ENCODE measurements at regions of chr9 and their contacts with region 1.

Region 1: DNA sequence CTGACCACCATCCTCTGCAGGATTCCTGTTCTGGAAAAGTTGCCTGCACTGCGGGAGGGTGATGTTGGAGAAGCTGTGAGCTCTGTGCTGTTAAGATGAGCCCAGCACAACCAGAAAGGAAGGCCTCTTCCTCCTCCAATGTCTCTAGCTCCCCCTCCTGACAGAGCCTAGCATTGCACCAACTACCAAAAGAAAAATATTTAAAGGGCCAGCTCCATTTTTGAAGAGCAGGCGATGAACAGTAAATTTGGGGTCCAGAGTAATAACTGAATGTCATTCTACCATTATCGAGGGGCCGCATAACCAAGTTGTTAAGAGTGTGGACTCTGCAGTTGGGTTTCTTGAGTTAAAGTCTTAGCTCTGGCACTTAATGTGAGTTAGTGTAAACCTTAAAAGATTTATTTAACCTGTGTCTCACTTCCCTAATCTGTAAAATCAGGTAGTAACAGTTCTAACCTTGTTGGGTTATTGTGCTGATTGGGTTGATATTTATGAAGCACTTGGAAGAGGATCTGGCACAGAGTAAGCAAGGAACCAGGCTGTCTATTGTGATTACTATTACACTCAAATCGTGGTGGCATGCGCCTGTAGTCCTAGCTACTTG is 3.9 kb downstream of the TEX53 start:
- DNase-seq: peak; percentile 72 to 85
- H3K4me3 ChIP-seq: no peak overlapping the region
- H3K4me3 Mint-ChIP-seq: no peak overlapping the region
- H3K27ac Mint-ChIP-seq: no peak overlapping the region
- H3K4me1 ChIP-seq: no peaks in the 10 kb centered on the region
- H3K4me1 Mint-ChIP-seq: no peaks in the 10 kb centered on the region
- H3K27me3 ChIP-seq: no peaks in the 10 kb centered on the region
- H3K27me3 Mint-ChIP-seq: no peaks in the 10 kb centered on the region
- CTCF ChIP-seq: peak; percentile 88 to 92

Region 2: GRCh38 chr9:114434878-114435311 is 218.8 kb before region 1 on chr9:
- CTCF ChIA-PET with region 1: interaction called, 26 read pairs
- POLR2A ChIA-PET with region 1: no interaction called
- intact Hi-C with region 1: loop called (anchors 1 kb)
- DNase-seq: peak; percentile 41 to 64
- H3K4me3 ChIP-seq: no peak overlapping the region
- H3K4me3 Mint-ChIP-seq: no peak overlapping the region
- H3K27ac Mint-ChIP-seq: no peak overlapping the region
- H3K4me1 ChIP-seq: no peaks in the 10 kb centered on the region
- H3K4me1 Mint-ChIP-seq: no peaks in the 10 kb centered on the region
- H3K27me3 ChIP-seq: no peaks in the 10 kb centered on the region
- H3K27me3 Mint-ChIP-seq: peaks cover 6% of the 10 kb centered on the region
- CTCF ChIP-seq: peak; percentile 68 to 70

Region 3: GRCh38 chr9:114487607-114488300 is 165.9 kb before region 1 on chr9:
- CTCF ChIA-PET with region 1: interaction called, 8 read pairs
- POLR2A ChIA-PET with region 1: no interaction called
- intact Hi-C with region 1: loop called (anchors 1 kb)
- DNase-seq: peak; percentile 74 to 84
- H3K4me3 ChIP-seq: no peak overlapping the region
- H3K4me3 Mint-ChIP-seq: no peak overlapping the region
- H3K27ac Mint-ChIP-seq: no peak overlapping the region
- H3K4me1 ChIP-seq: no peaks in the 10 kb centered on the region
- H3K4me1 Mint-ChIP-seq: no peaks in the 10 kb centered on the region
- H3K27me3 ChIP-seq: no peaks in the 10 kb centered on the region
- H3K27me3 Mint-ChIP-seq: no peaks in the 10 kb centered on the region
- CTCF ChIP-seq: peak; percentile 79 to 86